Gastrocnemius medialis (tissue), 4 donors: ENCODE measurements at regions of chr5 and their contacts with region 1.

Region 1: GRCh38 chr5:96807075-96807654 is 580 bp downstream of the ERAP1 start:
- DNase-seq: peak; percentile 78 to 88
- ATAC-seq: peak; percentile 60 to 64
- H3K4me3 ChIP-seq: peak overlapping the region; percentile 95 to 98 (median 97)
- H3K27ac ChIP-seq: peak overlapping the region; percentile 99 to 100 (median 100)
- H3K4me1 ChIP-seq: peaks cover 11 to 22% of the 10 kb centered on the region in 2 donors
- H3K27me3 ChIP-seq: no peaks in the 10 kb centered on the region
- CTCF ChIP-seq: no peak
- POLR2A ChIP-seq: peak; percentile 71 to 73

Region 2: GRCh38 chr5:96614110-96614691 is 193.0 kb before region 1 on chr5:
- in situ Hi-C with region 1: no loop called
- intact Hi-C with region 1: loop called (anchors 5 kb)
- DNase-seq: peak; percentile 42 to 57
- ATAC-seq: peak; percentile 97 to 99
- H3K4me3 ChIP-seq: no peak overlapping the region
- H3K27ac ChIP-seq: peak overlapping the region; percentile 46 to 75 (median 60)
- H3K4me1 ChIP-seq: peaks cover 4 to 16% of the 10 kb centered on the region in 2 donors
- H3K27me3 ChIP-seq: no peaks in the 10 kb centered on the region
- CTCF ChIP-seq: peak; percentile 61 to 76 (median 64)
- POLR2A ChIP-seq: no peak

Region 3: DNA sequence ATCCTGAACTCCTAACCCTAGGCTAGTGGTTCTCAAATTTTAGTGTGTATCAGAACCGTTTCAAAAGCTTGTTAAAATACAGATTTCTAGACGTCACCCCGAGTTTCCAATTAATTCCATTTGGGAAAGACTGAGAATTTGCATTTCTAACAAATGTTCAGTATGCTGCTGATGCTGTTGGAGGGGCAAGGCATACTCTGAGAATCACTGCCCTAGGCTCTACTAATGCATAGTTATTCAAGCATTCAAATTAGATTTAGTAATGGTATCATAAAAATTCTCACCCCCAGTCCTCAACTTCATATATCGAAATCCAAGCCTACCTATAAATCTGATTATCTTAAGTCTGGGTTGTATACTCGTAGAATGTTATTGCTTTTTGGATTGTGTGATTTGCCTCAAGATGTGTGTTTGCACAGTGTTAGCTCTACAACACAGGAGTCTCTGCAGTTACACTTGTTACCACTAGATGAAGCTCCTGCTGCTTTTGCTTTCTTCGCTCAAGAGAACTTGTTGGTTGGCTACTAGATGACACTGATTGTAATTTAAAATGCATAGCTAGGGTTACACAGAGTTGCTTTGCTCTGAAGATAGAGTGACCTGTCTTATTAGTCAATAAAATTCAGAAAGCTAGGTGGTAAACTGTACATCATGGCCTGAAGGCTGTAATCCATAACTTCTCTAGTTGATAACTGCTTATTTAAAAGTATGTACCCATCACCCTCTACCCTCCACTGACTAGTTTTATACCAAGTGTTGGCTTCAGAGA is 61.6 kb after region 1 on chr5:
- in situ Hi-C with region 1: no loop called
- intact Hi-C with region 1: loop called (anchors 2 kb)
- DNase-seq: no peak
- ATAC-seq: peak; percentile 96 to 99
- H3K4me3 ChIP-seq: no peak overlapping the region
- H3K27ac ChIP-seq: no peak overlapping the region
- H3K4me1 ChIP-seq: peaks cover 0 to 6% of the 10 kb centered on the region in 2 donors
- H3K27me3 ChIP-seq: no peaks in the 10 kb centered on the region
- CTCF ChIP-seq: peak; percentile 77 to 98 (median 90)
- POLR2A ChIP-seq: no peak